ENCODE measurements at regions of chr19 and their contacts with region 1.

Region 1: GRCh38 chr19:48970923-48971395 is 5.8 kb downstream of the FTL start:
- DNase-seq: peak; percentile 56 to 91
- H3K4me3 ChIP-seq: no peak overlapping the region
- H3K4me1 ChIP-seq: no peaks in the 10 kb centered on the region; the same call in 1 of the 2 replicates
- H3K27me3 ChIP-seq: no peaks in the 10 kb centered on the region

Region 2: GRCh38 chr19:48780631-48781391 is 190.1 kb before region 1 on chr19:
- in situ Hi-C with region 1: loop called (anchors 5 kb)
- DNase-seq: no peak
- H3K4me3 ChIP-seq: no peak overlapping the region
- H3K4me1 ChIP-seq: no peaks in the 10 kb centered on the region; the same call in 1 of the 2 replicates
- H3K27me3 ChIP-seq: no peaks in the 10 kb centered on the region